CD4-positive, alpha-beta T cell (primary cell): ENCODE measurements at regions of chr3 and their contacts with region 1.

Region 1: DNA sequence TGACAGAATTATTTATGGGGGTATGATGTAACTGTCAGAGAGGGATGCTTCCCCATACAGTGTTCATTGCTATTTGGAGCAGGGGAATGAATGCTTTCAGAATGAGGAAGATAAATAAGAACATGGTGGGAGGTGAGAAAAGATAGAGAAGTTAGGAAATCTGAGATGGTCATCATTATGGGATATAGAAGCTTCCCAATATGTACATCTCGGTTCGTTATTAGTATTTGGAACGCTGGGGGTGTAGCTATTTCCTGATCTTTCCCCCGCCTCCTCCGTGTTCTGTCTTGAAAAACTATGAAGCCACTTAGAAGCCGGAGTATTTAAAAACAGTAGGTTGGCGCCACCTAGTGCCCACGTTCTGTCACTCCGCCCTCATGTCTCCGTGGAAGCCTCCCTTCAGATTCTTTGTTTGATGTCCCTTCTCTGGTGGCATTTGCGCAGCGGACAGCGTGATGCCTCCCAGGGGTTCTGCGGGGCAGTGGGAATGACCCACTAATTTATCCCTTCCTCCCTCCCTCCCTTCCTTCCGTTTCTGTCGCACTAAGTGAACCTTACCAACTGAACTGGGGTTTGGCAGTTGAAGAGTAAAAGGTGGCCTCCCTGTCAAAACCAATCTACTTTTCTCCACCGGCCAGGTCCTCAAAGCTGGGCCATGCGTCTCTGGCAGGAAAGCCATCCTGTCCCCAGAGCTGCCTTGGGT is 184.5 kb downstream of the FEZF2 start:
- DNase-seq: peak; percentile 36 to 77 (median 49)
- ATAC-seq: peak; percentile 62
- H3K4me3 ChIP-seq: no peak overlapping the region
- H3K4me3 Mint-ChIP-seq: no peak overlapping the region
- H3K27ac ChIP-seq: no peak overlapping the region
- H3K27ac Mint-ChIP-seq: no peak overlapping the region
- H3K4me1 ChIP-seq: no peaks in the 10 kb centered on the region
- H3K4me1 Mint-ChIP-seq: peaks cover 5% of the 10 kb centered on the region
- H3K27me3 ChIP-seq: no peaks in the 10 kb centered on the region
- H3K27me3 Mint-ChIP-seq: no peaks in the 10 kb centered on the region
- CTCF ChIP-seq: peak; percentile 80

Region 2: DNA sequence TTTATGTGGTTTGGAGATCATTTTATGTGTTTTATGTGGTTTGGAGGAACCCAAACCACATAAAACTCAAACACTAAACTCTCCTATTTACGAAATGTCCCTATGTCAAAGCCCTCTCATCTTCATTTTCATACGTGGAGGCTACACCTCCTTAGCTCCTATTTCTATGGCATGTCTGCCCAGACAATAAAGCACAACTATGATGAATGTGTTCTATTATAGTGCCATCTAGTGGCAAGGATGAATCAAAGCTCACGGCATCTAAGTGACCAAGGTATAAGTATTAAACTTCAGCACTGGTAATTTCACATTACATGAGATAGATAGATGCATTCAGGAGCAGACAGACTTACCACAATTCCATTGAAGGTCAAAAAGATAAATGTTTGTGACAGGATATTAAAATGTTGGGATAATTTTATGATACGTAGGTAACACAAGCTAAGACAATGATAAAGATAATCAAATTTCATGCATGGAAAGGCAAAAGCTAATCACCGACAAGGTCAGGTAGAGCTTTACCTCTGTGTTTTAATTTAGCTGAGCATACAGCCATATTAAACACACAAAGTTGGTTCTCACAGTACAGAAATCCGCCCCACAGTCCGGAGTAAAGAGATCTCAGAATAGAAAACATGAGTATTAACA is 807.0 kb before region 1 on chr3:
- CTCF ChIA-PET with region 1: no interaction called
- POLR2A ChIA-PET with region 1: no interaction called
- intact Hi-C with region 1: loop called in 1 of 2 experiments (anchors 10 kb)
- DNase-seq: peak in 3 of 14 experiments; percentile 48 to 50 (median 50)
- ATAC-seq: peak; percentile 51
- H3K4me3 ChIP-seq: no peak overlapping the region
- H3K4me3 Mint-ChIP-seq: no peak overlapping the region
- H3K27ac ChIP-seq: no peak overlapping the region
- H3K27ac Mint-ChIP-seq: no peak overlapping the region
- H3K4me1 ChIP-seq: no peaks in the 10 kb centered on the region
- H3K4me1 Mint-ChIP-seq: peaks cover 5% of the 10 kb centered on the region
- H3K27me3 ChIP-seq: peaks cover 0 to 4% of the 10 kb centered on the region in 2 experiments
- H3K27me3 Mint-ChIP-seq: peaks cover 15% of the 10 kb centered on the region
- CTCF ChIP-seq: peak; percentile 66

Region 3: GRCh38 chr3:61858056-61858455 is 330.8 kb before region 1 on chr3:
- CTCF ChIA-PET with region 1: no interaction called
- POLR2A ChIA-PET with region 1: no interaction called
- intact Hi-C with region 1: loop called in 1 of 2 experiments (anchors 5 kb)
- DNase-seq: no peak
- ATAC-seq: no peak
- H3K4me3 ChIP-seq: no peak overlapping the region
- H3K4me3 Mint-ChIP-seq: no peak overlapping the region
- H3K27ac ChIP-seq: no peak overlapping the region
- H3K27ac Mint-ChIP-seq: no peak overlapping the region
- H3K4me1 ChIP-seq: no peaks in the 10 kb centered on the region
- H3K4me1 Mint-ChIP-seq: no peaks in the 10 kb centered on the region
- H3K27me3 ChIP-seq: no peaks in the 10 kb centered on the region
- H3K27me3 Mint-ChIP-seq: peaks cover 8% of the 10 kb centered on the region
- CTCF ChIP-seq: no peak

Region 4: DNA sequence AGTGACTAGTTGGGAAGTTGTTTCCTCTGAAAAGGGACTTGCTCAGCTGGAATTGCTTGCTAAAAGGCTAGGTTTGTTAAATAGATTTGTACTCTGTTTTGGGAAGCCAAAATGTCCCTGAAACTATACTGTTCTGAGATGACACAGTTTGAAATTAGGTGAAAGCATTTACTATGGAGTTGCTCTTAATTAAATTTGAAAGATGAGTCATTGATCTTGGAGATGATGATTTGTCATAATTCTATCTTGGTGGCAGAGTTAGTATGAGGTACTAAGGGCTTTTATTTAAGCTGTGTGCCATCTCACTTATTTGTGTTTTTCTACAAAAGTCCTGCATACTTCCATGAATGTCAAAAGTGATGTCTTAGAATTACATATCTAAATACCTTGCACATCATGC is 306.6 kb before region 1 on chr3:
- CTCF ChIA-PET with region 1: no interaction called
- POLR2A ChIA-PET with region 1: no interaction called
- intact Hi-C with region 1: no loop called
- DNase-seq: no peak
- ATAC-seq: no peak
- H3K4me3 ChIP-seq: no peak overlapping the region
- H3K4me3 Mint-ChIP-seq: no peak overlapping the region
- H3K27ac ChIP-seq: no peak overlapping the region
- H3K27ac Mint-ChIP-seq: no peak overlapping the region
- H3K4me1 ChIP-seq: no peaks in the 10 kb centered on the region
- H3K4me1 Mint-ChIP-seq: no peaks in the 10 kb centered on the region
- H3K27me3 ChIP-seq: no peaks in the 10 kb centered on the region
- H3K27me3 Mint-ChIP-seq: no peaks in the 10 kb centered on the region
- CTCF ChIP-seq: no peak

Region 5: GRCh38 chr3:62229920-62230319 is 41.1 kb after region 1 on chr3:
- CTCF ChIA-PET with region 1: no interaction called
- POLR2A ChIA-PET with region 1: no interaction called
- intact Hi-C with region 1: no loop called
- DNase-seq: no peak
- ATAC-seq: no peak
- H3K4me3 ChIP-seq: no peak overlapping the region
- H3K4me3 Mint-ChIP-seq: no peak overlapping the region
- H3K27ac ChIP-seq: no peak overlapping the region
- H3K27ac Mint-ChIP-seq: no peak overlapping the region
- H3K4me1 ChIP-seq: no peaks in the 10 kb centered on the region
- H3K4me1 Mint-ChIP-seq: no peaks in the 10 kb centered on the region
- H3K27me3 ChIP-seq: no peaks in the 10 kb centered on the region
- H3K27me3 Mint-ChIP-seq: peaks cover 11% of the 10 kb centered on the region
- CTCF ChIP-seq: no peak